Dendritic cell treated with granulocyte-macrophage colony-stimulating factor and Interleukin-4, amounts not matched to agents 40 ng/mL and 50 ng/mL, for 4 days (primary cell): ENCODE measurements at regions of chr10 and their contacts with region 1.

Region 1: DNA sequence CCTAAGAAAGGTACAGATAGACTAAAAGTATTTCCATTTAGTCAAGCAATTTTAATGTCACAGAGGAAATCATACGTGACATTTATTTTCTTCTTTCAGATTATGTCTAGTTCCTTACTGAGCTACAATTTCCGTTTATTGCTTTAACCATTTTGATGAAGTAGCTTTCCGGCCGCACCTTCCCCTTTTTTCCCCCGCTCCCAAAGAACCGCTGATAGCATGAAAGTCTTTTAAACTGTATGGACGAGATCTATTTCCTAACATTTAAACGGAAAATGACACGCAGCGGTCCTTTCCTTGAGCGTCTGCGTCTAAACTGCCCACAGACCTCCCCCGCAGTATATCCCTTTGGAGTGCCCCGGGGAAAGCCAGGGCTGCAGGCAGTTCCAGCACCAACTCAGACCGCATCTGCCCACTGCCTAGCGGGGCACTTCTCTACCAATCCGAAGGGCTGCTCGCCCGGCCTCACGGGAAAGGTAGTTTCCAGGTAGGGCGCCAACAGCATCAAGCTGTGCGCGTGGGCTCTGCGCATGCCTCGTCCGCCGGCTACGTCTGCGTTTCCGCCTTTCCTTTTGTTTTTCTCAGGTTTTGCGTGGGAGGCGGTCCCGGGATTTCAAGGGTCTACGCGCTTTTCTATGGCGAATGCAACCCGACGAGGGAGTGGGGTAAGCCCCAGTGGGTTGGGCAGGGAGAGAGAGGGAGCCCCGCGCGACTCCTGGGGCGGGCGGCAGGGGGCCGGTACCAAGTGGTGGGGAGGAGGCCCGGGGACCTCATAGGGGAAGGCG is at the start of gene ZNF33A:
- H3K4me3 Mint-ChIP-seq: peak within 1 kb of the TSS; percentile 94
- H3K27ac Mint-ChIP-seq: peak within 1 kb of the TSS; percentile 100
- H3K4me1 Mint-ChIP-seq: peaks cover 43% of the 10 kb centered on the region
- H3K27me3 Mint-ChIP-seq: no peaks in the 10 kb centered on the region

Region 2: DNA sequence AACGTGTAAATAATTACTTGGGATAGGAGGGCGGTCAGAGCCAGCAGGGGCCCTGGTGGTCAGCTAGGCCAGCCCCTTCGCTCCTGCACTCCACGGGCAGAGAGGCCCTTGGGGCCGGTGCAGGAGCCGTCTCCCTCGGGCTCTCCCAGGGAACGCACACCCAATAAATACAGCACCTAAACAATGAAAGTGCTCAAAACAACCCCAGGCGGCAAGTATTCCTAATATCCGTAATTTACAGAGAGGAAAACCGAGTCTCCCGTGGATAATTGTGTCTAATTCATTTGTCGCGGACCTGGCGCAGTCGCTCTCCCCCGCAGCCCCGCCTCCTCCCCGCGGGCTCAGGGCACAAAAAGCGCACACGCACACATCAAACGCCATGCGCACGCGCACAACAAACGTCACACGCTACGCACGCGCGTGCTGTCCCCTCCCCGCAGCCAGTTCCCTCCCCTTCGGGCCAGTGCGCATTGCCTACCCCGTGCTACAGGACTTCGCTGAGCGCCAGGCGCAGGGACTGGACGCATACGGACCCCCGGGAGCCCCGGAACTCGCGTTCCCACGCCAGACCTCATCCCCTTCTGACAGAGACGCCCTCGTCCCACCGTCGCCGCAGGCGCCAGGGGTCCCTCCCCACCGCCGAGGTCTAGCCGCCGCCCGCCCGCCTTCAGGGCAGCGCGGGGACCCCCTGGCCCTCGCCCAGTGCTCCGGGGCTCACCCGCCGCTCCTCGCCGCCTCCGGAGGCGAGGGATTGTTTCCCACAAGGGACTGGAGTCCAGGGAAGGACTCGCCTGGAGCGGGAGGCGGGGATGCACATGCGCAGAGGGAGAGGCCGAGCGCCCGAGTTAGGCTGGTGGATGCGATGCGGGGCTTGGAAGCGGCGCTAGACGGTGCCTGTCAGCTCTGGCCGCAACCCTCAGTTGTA is 152.8 kb before region 1 on chr10 and contains the start of gene ZNF248:
- intact Hi-C with region 1: loop called (anchors 2 kb)
- H3K4me3 Mint-ChIP-seq: peak within 1 kb of the TSS; percentile 81
- H3K27ac Mint-ChIP-seq: peak within 1 kb of the TSS; percentile 97
- H3K4me1 Mint-ChIP-seq: peaks cover 24% of the 10 kb centered on the region
- H3K27me3 Mint-ChIP-seq: peaks cover 4% of the 10 kb centered on the region

Region 3: DNA sequence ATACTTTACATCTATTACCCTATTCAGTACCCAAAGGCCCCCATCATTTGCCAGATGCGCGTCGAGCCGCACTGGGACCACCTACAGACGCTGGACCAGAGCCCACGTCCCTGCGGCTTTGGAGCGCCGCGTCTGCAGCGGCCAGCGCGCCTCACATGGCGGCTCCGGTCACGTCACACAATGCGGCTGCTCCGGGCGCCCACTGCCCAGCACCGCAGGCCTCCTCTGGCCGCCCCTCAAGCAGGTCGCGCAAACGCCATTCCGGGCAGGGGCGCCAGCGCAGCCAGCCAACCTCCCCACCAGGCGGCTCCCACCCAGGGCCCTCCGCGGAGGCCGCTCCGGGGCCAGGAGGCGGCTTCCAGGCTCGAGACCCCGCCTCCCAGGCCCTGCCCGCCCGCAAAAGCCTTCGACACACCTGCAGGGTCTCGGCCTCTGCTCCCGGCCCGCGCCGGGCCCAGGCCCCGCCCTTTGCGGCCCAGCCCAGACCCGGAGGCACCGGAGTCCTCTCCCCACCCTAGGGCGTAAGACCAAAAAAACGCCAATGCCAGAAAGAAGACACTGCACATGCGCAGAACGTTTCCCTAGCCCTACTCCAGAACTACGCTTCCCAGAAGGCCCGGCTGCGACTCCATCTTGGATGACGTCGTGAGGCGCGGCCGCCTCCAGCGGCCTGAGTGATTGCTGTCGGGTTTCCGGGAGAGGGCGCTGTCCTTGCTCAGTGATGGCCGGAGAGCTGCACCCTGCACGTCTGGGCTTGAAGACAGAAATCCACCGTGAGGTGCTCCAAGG is 34.0 kb before region 1 on chr10 and contains the start of gene ZNF25:
- intact Hi-C with region 1: loop called (anchors 1 kb)
- H3K4me3 Mint-ChIP-seq: peak within 1 kb of the TSS; percentile 92
- H3K27ac Mint-ChIP-seq: peak within 1 kb of the TSS; percentile 97
- H3K4me1 Mint-ChIP-seq: peaks cover 23% of the 10 kb centered on the region
- H3K27me3 Mint-ChIP-seq: no peaks in the 10 kb centered on the region